Thyroid gland (tissue), 4 donors: ENCODE measurements at regions of chr16 and their contacts with region 1.

Region 1: DNA sequence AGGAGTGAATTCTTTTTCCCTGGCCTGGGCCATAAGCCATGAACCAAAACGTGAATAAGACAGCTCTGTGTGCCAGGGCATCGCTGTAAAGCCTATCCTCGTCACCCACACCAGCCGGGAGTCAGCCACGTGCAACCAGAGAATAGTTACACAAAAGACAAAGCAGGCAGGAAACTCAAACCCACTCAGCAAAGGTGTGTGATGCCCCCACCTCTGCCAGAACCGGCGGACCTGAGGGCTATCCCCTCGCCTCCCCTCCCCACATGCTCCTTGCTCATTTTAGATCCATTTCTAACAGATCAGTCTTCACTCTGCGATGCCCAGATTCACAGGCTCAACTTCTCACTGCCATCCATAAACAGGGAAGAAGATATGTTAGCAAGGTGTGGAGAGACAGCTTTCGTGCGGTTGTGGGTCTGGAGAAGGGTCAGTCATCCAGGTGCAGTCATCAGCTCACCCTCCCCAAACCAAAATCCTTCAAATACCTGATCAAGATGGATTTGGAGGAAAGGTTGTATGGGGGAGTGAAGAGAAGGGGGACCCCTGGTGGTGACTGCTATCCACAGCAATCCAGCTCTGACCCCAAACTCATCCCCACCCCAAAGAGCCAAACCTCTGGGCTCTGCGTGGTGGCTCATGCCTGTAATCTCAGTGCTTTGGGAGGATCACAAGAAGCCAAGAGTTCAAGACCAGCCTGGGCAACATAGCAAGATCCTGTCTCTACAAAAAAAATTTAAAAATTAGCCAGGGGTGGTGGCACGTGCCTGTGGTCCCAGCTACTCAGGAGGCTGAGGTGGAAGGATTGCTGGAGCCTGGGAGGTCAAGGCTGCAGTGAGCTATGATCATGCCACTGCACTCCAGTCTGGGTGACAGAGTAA is 219.2 kb downstream of the C16orf78 start:
- DNase-seq: peak; percentile 10 to 22
- H3K4me3 ChIP-seq: no peak overlapping the region
- H3K27ac ChIP-seq: no peak overlapping the region
- H3K4me1 ChIP-seq: no peaks in the 10 kb centered on the region
- H3K27me3 ChIP-seq: no peaks in the 10 kb centered on the region
- CTCF ChIP-seq: peak; percentile 29 to 76 (median 52)
- POLR2A ChIP-seq: no peak

Region 2: GRCh38 chr16:49419006-49419405 is 173.8 kb before region 1 on chr16:
- intact Hi-C with region 1: loop called (anchors 10 kb)
- DNase-seq: no peak
- H3K4me3 ChIP-seq: no peak overlapping the region
- H3K27ac ChIP-seq: no peak overlapping the region
- H3K4me1 ChIP-seq: no peaks in the 10 kb centered on the region
- H3K27me3 ChIP-seq: no peaks in the 10 kb centered on the region
- CTCF ChIP-seq: no peak
- POLR2A ChIP-seq: no peak

Region 3: DNA sequence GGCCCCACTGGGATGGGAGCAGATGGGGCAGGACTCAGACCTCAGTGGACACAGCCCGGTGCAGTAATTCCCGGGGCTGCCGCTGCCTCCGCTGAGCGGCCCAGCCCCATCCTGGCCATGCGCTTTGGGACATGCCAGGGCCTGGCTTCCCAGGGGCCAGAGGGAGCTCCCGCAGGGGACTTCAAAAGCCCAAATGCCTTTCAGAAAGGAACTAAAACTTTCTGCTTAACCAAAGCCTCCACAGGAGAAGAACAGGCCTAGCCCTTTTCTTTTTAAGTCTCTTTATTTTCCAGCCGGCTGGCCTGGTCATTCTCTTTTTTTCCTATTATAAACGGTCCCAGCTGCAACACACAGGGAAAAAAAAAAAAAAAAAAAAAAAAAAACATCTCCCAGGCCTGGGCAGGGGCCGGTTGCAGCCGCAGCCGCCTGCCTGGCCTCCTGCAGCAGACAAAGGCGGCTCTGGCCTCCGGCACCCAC is 273.8 kb after region 1 on chr16:
- intact Hi-C with region 1: loop called (anchors 10 kb)
- DNase-seq: no peak
- H3K4me3 ChIP-seq: no peak overlapping the region
- H3K27ac ChIP-seq: no peak overlapping the region
- H3K4me1 ChIP-seq: no peaks in the 10 kb centered on the region
- H3K27me3 ChIP-seq: no peaks in the 10 kb centered on the region
- CTCF ChIP-seq: no peak
- POLR2A ChIP-seq: no peak